PC-9 (cell line): ENCODE measurements at regions of chr2 and their contacts with region 1.

Region 1: GRCh38 chr2:187453078-187453641 is 5.1 kb upstream of the CALCRL start:
- DNase-seq: no peak
- H3K4me3 ChIP-seq: no peak overlapping the region
- H3K27ac ChIP-seq: no peak overlapping the region
- H3K4me1 ChIP-seq: no peaks in the 10 kb centered on the region
- H3K27me3 ChIP-seq: no peaks in the 10 kb centered on the region
- CTCF ChIP-seq: peak; percentile 64

Region 2: GRCh38 chr2:186862869-186863709 is 590.1 kb before region 1 on chr2:
- CTCF ChIA-PET with region 1: interaction called, 4 read pairs
- POLR2A ChIA-PET with region 1: no interaction called
- intact Hi-C with region 1: loop called (anchors 1 kb)
- DNase-seq: no peak
- H3K4me3 ChIP-seq: no peak overlapping the region
- H3K27ac ChIP-seq: no peak overlapping the region
- H3K4me1 ChIP-seq: no peaks in the 10 kb centered on the region
- H3K27me3 ChIP-seq: no peaks in the 10 kb centered on the region
- CTCF ChIP-seq: peak; percentile 74

Region 3: GRCh38 chr2:186903216-186903615 is 549.9 kb before region 1 on chr2:
- CTCF ChIA-PET with region 1: no interaction called
- POLR2A ChIA-PET with region 1: no interaction called
- intact Hi-C with region 1: loop called (anchors 5 kb)
- DNase-seq: no peak
- H3K4me3 ChIP-seq: no peak overlapping the region
- H3K27ac ChIP-seq: no peak overlapping the region
- H3K4me1 ChIP-seq: no peaks in the 10 kb centered on the region
- H3K27me3 ChIP-seq: no peaks in the 10 kb centered on the region
- CTCF ChIP-seq: peak; percentile 64

Region 4: GRCh38 chr2:189096769-189097447 is 1643.7 kb after region 1 on chr2:
- CTCF ChIA-PET with region 1: interaction called, 16 read pairs
- POLR2A ChIA-PET with region 1: no interaction called
- intact Hi-C with region 1: no loop called
- DNase-seq: peak; percentile 8 to 62
- H3K4me3 ChIP-seq: no peak overlapping the region
- H3K27ac ChIP-seq: no peak overlapping the region
- H3K4me1 ChIP-seq: no peaks in the 10 kb centered on the region
- H3K27me3 ChIP-seq: no peaks in the 10 kb centered on the region
- CTCF ChIP-seq: no peak